CD4-positive, alpha-beta T cell (primary cell): ENCODE measurements at regions of chr5 and their contacts with region 1.

Region 1: DNA sequence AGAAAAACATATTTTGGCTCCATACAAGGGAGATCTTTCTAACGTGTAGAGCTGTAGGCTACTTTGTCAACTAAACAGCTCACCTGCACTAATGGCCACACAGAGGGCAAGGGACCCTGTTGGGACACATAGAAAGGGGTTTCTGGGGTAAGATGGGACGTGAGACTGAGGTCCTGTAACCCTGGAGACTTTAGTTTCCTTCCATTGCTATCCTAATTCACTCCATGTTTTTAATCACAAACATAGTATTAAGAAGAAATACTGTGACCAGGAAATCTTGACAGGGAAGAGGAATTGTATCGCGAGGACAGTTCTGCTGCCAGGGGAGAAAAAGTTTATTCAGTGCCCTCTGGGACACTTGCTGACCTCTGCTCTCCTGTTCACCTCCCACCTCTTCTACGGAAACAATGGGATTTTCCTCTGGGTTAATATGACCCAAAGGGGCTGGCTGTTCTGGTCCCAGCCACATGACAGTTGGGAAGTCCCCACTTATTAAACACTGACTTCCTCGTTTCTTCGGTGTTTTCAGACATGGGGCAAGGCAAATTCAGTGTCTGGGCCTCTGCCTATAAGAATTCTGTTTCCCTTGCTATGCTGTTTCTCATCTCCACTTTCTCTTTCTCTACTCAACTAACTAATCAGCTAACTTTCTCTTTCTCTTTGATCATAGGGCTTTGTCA is 106.9 kb upstream of the SEMA6A start:
- DNase-seq: no peak
- ATAC-seq: no peak
- H3K4me3 ChIP-seq: no peak overlapping the region
- H3K4me3 Mint-ChIP-seq: no peak overlapping the region
- H3K27ac ChIP-seq: no peak overlapping the region
- H3K27ac Mint-ChIP-seq: no peak overlapping the region
- H3K4me1 ChIP-seq: no peaks in the 10 kb centered on the region
- H3K4me1 Mint-ChIP-seq: no peaks in the 10 kb centered on the region
- H3K27me3 ChIP-seq: no peaks in the 10 kb centered on the region
- H3K27me3 Mint-ChIP-seq: peaks cover 2% of the 10 kb centered on the region
- CTCF ChIP-seq: no peak

Region 2: DNA sequence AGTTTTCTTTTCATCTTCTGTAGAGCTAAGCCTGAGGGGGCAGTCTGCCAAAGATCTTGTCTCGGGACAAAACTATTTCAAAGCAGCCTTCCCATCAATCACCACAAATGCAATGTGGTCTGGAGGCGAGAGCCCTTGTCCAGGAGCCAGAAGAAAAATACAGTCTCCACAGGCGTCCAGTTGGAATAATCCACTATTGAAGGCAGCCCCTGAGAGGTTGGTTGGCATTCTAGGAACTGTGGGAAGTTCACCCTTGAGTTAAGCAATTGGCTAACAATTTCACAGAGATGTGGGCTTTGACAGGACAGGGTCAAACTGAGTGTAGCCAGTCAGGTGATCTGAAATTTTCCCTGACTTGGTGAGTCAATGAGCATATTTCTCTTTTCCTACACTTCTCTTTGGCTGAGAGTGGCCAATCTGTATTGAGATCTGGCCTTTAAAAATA is 178.8 kb before region 1 on chr5:
- CTCF ChIA-PET with region 1: no interaction called
- POLR2A ChIA-PET with region 1: no interaction called
- intact Hi-C with region 1: no loop called
- DNase-seq: no peak
- ATAC-seq: no peak
- H3K4me3 ChIP-seq: no peak overlapping the region
- H3K4me3 Mint-ChIP-seq: no peak overlapping the region
- H3K27ac ChIP-seq: no peak overlapping the region
- H3K27ac Mint-ChIP-seq: no peak overlapping the region
- H3K4me1 ChIP-seq: no peaks in the 10 kb centered on the region
- H3K4me1 Mint-ChIP-seq: no peaks in the 10 kb centered on the region
- H3K27me3 ChIP-seq: no peaks in the 10 kb centered on the region
- H3K27me3 Mint-ChIP-seq: no peaks in the 10 kb centered on the region
- CTCF ChIP-seq: no peak

Region 3: DNA sequence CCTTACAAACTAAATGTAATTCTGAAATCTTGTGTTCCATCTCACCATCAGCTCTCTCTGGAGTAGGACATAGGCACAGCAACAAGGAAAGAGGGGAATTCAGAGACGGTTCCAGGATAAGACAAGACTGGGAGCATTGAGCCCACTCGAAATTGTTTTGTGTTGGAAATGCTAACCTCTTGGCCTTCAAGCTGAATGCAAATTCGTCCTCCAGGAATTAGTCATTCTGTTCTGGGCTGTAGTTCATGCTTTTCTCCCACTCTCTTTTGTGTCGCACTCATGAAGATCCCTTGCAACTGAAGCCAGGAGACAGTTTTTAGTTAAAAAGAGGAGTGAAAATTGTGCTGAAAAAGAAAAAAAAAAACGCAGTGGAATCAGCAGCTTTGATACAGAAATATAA is 14.9 kb after region 1 on chr5:
- CTCF ChIA-PET with region 1: no interaction called
- POLR2A ChIA-PET with region 1: no interaction called
- intact Hi-C with region 1: loop called in 1 of 2 experiments (anchors 1 kb)
- DNase-seq: no peak
- ATAC-seq: no peak
- H3K4me3 ChIP-seq: no peak overlapping the region
- H3K4me3 Mint-ChIP-seq: no peak overlapping the region
- H3K27ac ChIP-seq: no peak overlapping the region
- H3K27ac Mint-ChIP-seq: no peak overlapping the region
- H3K4me1 ChIP-seq: no peaks in the 10 kb centered on the region
- H3K4me1 Mint-ChIP-seq: no peaks in the 10 kb centered on the region
- H3K27me3 ChIP-seq: no peaks in the 10 kb centered on the region
- H3K27me3 Mint-ChIP-seq: no peaks in the 10 kb centered on the region
- CTCF ChIP-seq: no peak